CD8-positive, alpha-beta T cell (primary cell): ENCODE measurements at regions of chrX and their contacts with region 1.

Region 1: GRCh38 chrX:40097497-40098263 is at the start of gene BCOR:
- DNase-seq: peak; percentile 47 to 88 (median 75)
- ATAC-seq: peak; percentile 29
- H3K4me3 ChIP-seq: peak within 1 kb of the TSS; percentile 47 to 57
- H3K4me3 Mint-ChIP-seq: peak within 1 kb of the TSS; percentile 94
- H3K27ac ChIP-seq: peak within 1 kb of the TSS; percentile 23 to 60
- H3K27ac Mint-ChIP-seq: peak within 1 kb of the TSS; percentile 93
- H3K4me1 ChIP-seq: peaks cover 22% of the 10 kb centered on the region
- H3K4me1 Mint-ChIP-seq: peaks cover 27% of the 10 kb centered on the region
- H3K27me3 ChIP-seq: no peaks in the 10 kb centered on the region
- H3K27me3 Mint-ChIP-seq: no peaks in the 10 kb centered on the region
- CTCF ChIP-seq: no peak
- total RNA-seq, gene BCOR: 35.5 to 38.5 TPM

Region 2: DNA sequence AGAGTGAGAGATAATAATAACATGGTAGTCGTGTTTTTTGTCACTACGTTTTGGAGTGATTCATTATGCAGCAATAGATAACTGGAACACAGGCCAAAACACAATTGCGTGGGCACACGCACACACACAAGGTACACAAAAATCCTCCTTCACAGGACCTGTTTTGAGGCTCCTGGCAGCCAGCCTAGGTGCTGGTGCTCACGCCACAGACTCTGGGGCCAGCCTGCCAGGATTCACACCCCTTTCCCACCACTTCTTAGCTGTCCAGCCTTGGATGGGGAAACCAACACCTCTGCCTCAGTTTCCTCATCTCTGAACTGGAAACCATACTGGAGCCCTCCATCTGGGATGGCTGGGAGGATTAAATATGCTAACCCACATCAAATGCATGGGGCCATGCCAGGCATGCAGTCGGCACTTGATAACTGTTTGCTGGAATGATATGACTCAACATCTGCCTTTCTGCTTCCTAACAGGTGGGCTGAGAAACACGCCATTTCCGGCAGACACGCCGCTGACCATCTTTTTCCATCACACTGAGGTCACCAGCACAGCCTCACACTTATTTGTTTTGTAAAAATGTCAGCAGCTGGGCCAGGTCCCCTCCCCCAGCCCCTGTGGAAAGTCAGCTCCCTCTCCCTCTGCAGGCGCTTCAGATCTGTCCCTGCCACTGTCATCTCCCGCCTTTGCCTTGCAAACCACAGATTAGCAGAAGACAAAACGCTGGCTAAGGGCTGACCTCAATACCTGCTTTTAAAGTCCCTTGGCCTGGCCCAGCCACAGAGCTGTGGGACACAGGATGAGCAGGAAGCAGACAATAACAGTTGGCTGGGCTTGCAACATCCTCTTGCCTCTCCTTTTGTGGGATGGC is 237.5 kb before region 1 on chrX:
- CTCF ChIA-PET with region 1: no interaction called
- POLR2A ChIA-PET with region 1: no interaction called
- intact Hi-C with region 1: loop called in 1 of 2 experiments (anchors 2 kb)
- DNase-seq: peak; percentile 9 to 85 (median 68)
- ATAC-seq: peak; percentile 48
- H3K4me3 ChIP-seq: no peak overlapping the region
- H3K4me3 Mint-ChIP-seq: no peak overlapping the region
- H3K27ac ChIP-seq: no peak overlapping the region
- H3K27ac Mint-ChIP-seq: peak overlapping the region; percentile 83
- H3K4me1 ChIP-seq: peaks cover 26% of the 10 kb centered on the region
- H3K4me1 Mint-ChIP-seq: peaks cover 31% of the 10 kb centered on the region
- H3K27me3 ChIP-seq: no peaks in the 10 kb centered on the region
- H3K27me3 Mint-ChIP-seq: no peaks in the 10 kb centered on the region
- CTCF ChIP-seq: no peak

Region 3: DNA sequence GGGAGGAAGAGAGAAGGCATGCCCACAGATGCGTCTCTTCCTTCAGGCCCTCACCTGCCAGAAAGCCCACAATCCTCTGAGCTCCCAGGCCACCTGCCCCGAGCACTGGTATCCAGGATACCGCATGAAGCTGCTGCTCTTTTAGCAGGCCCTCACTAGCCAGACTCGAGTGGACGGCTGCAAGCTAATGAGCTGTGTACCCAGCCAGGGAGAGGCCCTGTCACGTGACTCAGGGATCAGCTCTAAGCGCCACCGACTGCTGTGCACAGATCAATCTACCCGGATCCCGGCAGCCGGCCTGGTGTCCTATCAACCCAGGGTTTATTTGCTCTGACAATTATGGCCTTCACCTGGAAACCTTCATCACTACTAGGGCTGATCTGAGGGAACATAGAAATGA is 39.0 kb before region 1 on chrX:
- CTCF ChIA-PET with region 1: interaction called, 3 read pairs
- POLR2A ChIA-PET with region 1: interaction called, 7 read pairs
- intact Hi-C with region 1: loop called in 1 of 2 experiments (anchors 5 kb)
- DNase-seq: no peak
- ATAC-seq: no peak
- H3K4me3 ChIP-seq: no peak overlapping the region
- H3K4me3 Mint-ChIP-seq: no peak overlapping the region
- H3K27ac ChIP-seq: no peak overlapping the region
- H3K27ac Mint-ChIP-seq: no peak overlapping the region
- H3K4me1 ChIP-seq: peaks cover 32% of the 10 kb centered on the region
- H3K4me1 Mint-ChIP-seq: peaks cover 35% of the 10 kb centered on the region
- H3K27me3 ChIP-seq: no peaks in the 10 kb centered on the region
- H3K27me3 Mint-ChIP-seq: no peaks in the 10 kb centered on the region
- CTCF ChIP-seq: no peak

Region 4: DNA sequence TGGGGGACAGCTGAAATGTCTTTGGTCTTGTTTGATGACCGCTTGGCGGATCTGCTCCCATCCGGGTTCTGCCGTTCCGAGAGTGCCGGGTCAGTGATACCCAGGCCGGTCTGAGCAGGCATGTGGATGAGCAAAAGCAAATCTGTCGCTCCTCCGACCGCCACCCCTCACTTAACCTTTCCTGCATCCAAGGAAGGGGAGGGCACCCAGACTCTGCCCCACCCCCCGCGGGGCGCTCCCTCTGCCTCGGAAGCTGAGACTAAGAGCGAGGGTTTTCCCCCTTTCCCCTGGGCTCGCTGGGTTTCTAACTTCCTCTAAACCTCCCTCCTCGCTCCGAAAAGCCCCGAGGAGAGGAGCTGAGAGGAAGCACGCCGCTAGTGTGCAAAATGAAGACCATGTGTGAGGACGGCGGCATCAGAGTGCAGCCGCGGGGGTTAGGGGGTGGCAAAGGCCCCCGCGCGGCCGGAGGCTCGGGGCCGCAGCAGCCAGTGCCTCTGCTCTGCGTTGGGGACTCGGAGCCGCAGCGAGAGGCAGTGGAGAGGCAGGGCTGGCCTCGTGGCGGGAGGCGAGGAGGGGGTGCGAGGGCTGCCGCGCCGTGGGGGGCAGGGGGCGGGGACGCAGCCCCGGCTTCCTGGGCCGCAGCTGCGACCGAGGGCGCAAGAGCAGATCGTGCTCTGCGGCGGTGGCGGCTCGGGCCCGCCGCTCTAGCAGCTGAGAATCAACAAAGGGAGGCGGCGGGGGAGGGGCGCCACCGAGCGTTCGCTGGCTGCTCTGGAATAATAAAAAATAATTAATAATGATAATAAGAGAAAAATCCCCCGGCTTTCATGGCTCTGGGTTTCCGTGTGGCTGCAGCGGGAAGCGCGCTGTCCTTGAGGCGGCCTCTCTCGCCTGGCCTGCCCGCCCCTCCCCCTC is 55.9 kb after region 1 on chrX:
- CTCF ChIA-PET with region 1: interaction called, 7 read pairs
- POLR2A ChIA-PET with region 1: interaction called, 22 read pairs
- intact Hi-C with region 1: loop called in 1 of 2 experiments (anchors 2 kb)
- DNase-seq: peak in 6 of 9 experiments; percentile 53 to 87 (median 68)
- ATAC-seq: peak; percentile 59
- H3K4me3 ChIP-seq: peak overlapping the region; percentile 45 to 47
- H3K4me3 Mint-ChIP-seq: peak overlapping the region; percentile 81
- H3K27ac ChIP-seq: no peak overlapping the region
- H3K27ac Mint-ChIP-seq: no peak overlapping the region
- H3K4me1 ChIP-seq: no peaks in the 10 kb centered on the region
- H3K4me1 Mint-ChIP-seq: peaks cover 21% of the 10 kb centered on the region
- H3K27me3 ChIP-seq: no peaks in the 10 kb centered on the region
- H3K27me3 Mint-ChIP-seq: no peaks in the 10 kb centered on the region
- CTCF ChIP-seq: no peak

Region 5: GRCh38 chrX:40175511-40176350 is 78.1 kb after region 1 on chrX:
- CTCF ChIA-PET with region 1: no interaction called
- POLR2A ChIA-PET with region 1: interaction called, 106 read pairs
- intact Hi-C with region 1: loop called (anchors 1 to 2 kb)
- DNase-seq: peak; percentile 52 to 90 (median 76)
- ATAC-seq: peak; percentile 50
- H3K4me3 ChIP-seq: peak overlapping the region; percentile 47 to 65
- H3K4me3 Mint-ChIP-seq: peak overlapping the region; percentile 88
- H3K27ac ChIP-seq: peak overlapping the region; percentile 73 to 95
- H3K27ac Mint-ChIP-seq: peak overlapping the region; percentile 97
- H3K4me1 ChIP-seq: peaks cover 30% of the 10 kb centered on the region
- H3K4me1 Mint-ChIP-seq: peaks cover 39% of the 10 kb centered on the region
- H3K27me3 ChIP-seq: no peaks in the 10 kb centered on the region
- H3K27me3 Mint-ChIP-seq: no peaks in the 10 kb centered on the region
- CTCF ChIP-seq: no peak

Region 6: DNA sequence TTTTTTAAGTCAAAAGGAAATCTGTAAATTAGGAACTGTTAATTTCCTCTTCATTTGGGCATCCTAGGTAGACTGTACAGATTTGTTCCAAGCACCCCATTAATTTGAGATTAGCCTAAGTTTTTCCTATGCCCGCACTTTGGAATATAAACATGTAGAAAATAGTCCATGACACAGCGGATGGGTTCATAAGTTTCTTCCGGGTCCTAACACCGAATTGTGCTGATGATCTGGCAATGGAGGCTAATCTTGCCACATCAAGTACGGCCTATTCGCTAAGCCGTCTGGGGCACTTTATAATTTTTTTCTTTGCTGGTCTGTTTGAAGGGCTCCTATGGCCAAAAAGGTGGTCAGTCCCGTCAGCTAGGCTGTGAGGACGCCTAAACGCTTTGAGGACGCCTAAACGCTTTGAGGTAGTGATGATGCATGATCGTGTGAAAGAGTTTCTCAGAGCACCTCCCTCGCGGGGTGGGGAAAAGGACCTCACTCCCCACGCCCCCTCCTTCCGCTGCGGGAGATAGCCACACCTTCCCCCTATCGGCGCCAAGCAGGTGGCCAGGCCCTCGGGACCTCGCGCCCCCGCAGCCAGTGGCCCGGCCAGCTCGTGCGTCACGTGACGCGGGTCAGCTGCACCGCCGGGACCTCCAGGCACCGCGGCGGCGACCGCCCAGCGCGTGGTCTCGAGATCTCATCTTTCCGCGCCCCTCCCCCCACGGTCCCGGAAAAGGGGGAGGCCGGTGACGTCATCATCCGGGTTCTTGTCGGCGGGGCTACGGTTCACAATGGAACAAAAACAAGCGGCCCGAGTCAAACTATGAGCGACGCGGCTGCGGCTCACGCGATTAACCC is 986.6 kb after region 1 on chrX:
- CTCF ChIA-PET with region 1: no interaction called
- POLR2A ChIA-PET with region 1: no interaction called
- intact Hi-C with region 1: loop called in 1 of 2 experiments (anchors 10 kb)
- DNase-seq: peak; percentile 88 to 100 (median 96)
- ATAC-seq: peak; percentile 66
- H3K4me3 ChIP-seq: peak overlapping the region; percentile 68 to 95
- H3K4me3 Mint-ChIP-seq: peak overlapping the region; percentile 95
- H3K27ac ChIP-seq: peak overlapping the region; percentile 98 to 100
- H3K27ac Mint-ChIP-seq: peak overlapping the region; percentile 100
- H3K4me1 ChIP-seq: peaks cover 19% of the 10 kb centered on the region
- H3K4me1 Mint-ChIP-seq: peaks cover 24% of the 10 kb centered on the region
- H3K27me3 ChIP-seq: no peaks in the 10 kb centered on the region
- H3K27me3 Mint-ChIP-seq: no peaks in the 10 kb centered on the region
- CTCF ChIP-seq: no peak